Activated CD4-positive, alpha-beta T cell treated with anti-CD3 and anti-CD28 coated beads for 36 hours (primary cell): ENCODE measurements at regions of chr9 and their contacts with region 1.

Region 1: GRCh38 chr9:14353222-14354056 is 39.5 kb upstream of the NFIB start:
- DNase-seq: peak; percentile 90
- ATAC-seq: peak; percentile 33
- H3K4me3 Mint-ChIP-seq: no peak overlapping the region
- H3K27ac Mint-ChIP-seq: no peak overlapping the region
- H3K4me1 Mint-ChIP-seq: peaks cover 6% of the 10 kb centered on the region
- H3K27me3 Mint-ChIP-seq: peaks cover 55% of the 10 kb centered on the region

Region 2: DNA sequence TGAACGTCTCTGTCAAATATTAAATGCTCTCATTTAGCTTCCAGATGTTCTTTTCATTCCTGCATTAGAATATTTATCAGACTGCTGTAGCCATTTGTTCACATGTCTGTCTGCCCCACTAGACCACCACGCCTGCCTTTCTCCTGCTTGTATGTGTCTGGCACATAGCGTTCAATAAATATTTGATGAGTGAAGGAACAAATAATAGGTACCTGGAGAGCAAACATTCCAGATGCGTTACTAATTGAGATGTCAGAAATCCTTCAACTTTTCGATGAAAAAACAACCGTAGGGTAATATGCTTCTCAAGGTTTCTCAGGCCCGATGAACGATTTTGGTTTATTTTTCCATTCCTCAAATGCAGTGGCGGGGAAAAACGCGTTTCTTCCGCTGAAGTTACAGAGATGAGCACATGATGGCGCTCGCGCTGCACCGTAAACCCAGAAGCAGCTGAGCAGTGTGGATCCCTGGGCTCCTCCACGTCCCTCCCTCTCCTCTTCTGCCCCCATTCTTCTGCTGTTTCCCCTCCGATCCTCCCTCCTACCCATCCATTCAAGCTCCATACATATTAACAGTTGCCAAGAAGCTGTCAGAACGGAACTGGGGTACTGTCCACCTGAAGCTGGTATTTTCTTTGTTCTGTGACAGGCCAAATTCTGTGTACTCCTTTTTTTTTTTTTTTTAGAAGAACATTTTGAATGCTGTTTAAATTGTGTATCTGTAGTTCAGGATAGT is 1319.3 kb before region 1 on chr9:
- CTCF ChIA-PET with region 1: no interaction called
- POLR2A ChIA-PET with region 1: no interaction called
- intact Hi-C with region 1: loop called in 1 of 2 experiments (anchors 5 kb)
- DNase-seq: peak; percentile 39
- ATAC-seq: no peak
- H3K4me3 Mint-ChIP-seq: no peak overlapping the region
- H3K27ac Mint-ChIP-seq: no peak overlapping the region
- H3K4me1 Mint-ChIP-seq: no peaks in the 10 kb centered on the region
- H3K27me3 Mint-ChIP-seq: no peaks in the 10 kb centered on the region

Region 3: DNA sequence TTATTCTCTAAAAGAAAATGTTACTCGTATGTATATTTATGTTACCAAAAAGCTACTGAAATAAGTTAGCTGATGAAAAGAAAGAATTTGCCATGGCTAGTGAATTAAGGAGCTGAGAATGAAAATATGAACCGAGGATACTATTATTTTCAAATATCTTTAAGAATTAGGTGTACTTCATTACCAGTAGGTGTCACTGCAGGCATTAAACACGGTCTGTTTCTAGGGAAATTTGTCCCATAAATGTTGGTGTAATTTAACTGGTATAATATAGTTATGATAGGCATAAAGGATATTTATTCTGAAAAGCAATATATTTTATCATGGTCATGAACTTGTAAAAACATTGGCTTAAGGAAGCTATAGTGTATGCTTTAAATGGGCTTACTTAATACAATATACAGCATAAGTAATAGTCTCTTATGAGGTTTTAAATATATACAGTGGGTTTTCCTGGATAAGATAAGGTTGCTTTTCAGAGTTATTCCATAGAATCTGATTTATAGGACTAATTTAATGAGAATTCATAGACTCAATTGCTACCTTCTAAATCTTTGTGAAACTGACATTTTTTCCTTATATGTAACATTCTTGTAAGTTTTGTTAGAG is 1001.6 kb before region 1 on chr9:
- CTCF ChIA-PET with region 1: no interaction called
- POLR2A ChIA-PET with region 1: no interaction called
- intact Hi-C with region 1: loop called in 1 of 2 experiments (anchors 2 kb)
- DNase-seq: no peak
- ATAC-seq: no peak
- H3K4me3 Mint-ChIP-seq: no peak overlapping the region
- H3K27ac Mint-ChIP-seq: no peak overlapping the region
- H3K4me1 Mint-ChIP-seq: no peaks in the 10 kb centered on the region
- H3K27me3 Mint-ChIP-seq: no peaks in the 10 kb centered on the region

Region 4: DNA sequence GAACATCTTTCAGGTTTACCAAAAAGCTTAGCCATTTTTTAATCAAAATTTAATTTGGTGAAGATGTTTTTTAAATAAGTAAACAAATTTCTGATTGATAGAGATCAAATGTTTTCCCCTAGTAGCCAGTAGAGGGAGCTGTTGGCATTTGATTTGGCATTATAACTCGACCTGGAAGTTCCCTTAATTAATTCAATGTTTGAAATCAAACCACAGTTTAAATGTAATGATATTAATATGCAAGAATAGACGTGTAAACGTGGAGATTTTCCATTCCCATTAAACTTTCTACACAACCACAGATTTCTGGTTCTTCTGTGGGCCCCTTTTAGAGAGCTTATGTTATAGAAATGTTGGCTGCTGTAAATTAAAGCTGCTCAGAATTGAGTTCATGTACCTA is 925.9 kb before region 1 on chr9:
- CTCF ChIA-PET with region 1: interaction called, 20 read pairs
- POLR2A ChIA-PET with region 1: no interaction called
- intact Hi-C with region 1: loop called (anchors 1 kb)
- DNase-seq: no peak
- ATAC-seq: no peak
- H3K4me3 Mint-ChIP-seq: no peak overlapping the region
- H3K27ac Mint-ChIP-seq: no peak overlapping the region
- H3K4me1 Mint-ChIP-seq: no peaks in the 10 kb centered on the region
- H3K27me3 Mint-ChIP-seq: no peaks in the 10 kb centered on the region

Region 5: GRCh38 chr9:13446938-13447842 is 906.2 kb before region 1 on chr9:
- CTCF ChIA-PET with region 1: no interaction called
- POLR2A ChIA-PET with region 1: no interaction called
- intact Hi-C with region 1: loop called in 1 of 2 experiments (anchors 5 kb)
- DNase-seq: no peak
- ATAC-seq: no peak
- H3K4me3 Mint-ChIP-seq: no peak overlapping the region
- H3K27ac Mint-ChIP-seq: no peak overlapping the region
- H3K4me1 Mint-ChIP-seq: no peaks in the 10 kb centered on the region
- H3K27me3 Mint-ChIP-seq: no peaks in the 10 kb centered on the region

Region 6: GRCh38 chr9:14768405-14769229 is 415.2 kb after region 1 on chr9:
- CTCF ChIA-PET with region 1: no interaction called
- POLR2A ChIA-PET with region 1: no interaction called
- intact Hi-C with region 1: loop called in 1 of 2 experiments (anchors 1 kb)
- DNase-seq: no peak
- ATAC-seq: no peak
- H3K4me3 Mint-ChIP-seq: no peak overlapping the region
- H3K27ac Mint-ChIP-seq: no peak overlapping the region
- H3K4me1 Mint-ChIP-seq: no peaks in the 10 kb centered on the region
- H3K27me3 Mint-ChIP-seq: peaks cover 27% of the 10 kb centered on the region

Region 7: DNA sequence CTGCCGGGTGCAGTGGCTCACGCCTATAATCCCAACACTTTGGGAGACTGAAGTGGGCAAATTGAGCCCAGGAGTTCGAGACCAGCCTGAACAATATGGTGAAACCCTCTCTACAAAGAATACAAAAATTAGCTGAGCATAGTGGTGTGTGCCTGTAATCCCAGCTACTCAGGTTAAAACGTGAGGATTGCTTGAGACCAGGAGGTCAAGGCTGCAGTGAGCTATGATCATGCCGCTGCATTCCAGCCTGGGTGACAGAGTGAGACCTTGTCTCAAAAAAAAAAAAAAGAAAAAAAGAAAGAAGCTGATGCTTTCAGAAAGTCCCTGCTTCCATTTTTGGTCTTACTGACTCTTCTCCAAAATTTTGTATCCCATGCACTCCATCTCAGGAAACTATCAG is 1100.5 kb after region 1 on chr9:
- CTCF ChIA-PET with region 1: no interaction called
- POLR2A ChIA-PET with region 1: no interaction called
- intact Hi-C with region 1: no loop called
- DNase-seq: no peak
- ATAC-seq: no peak
- H3K4me3 Mint-ChIP-seq: no peak overlapping the region
- H3K27ac Mint-ChIP-seq: no peak overlapping the region
- H3K4me1 Mint-ChIP-seq: no peaks in the 10 kb centered on the region
- H3K27me3 Mint-ChIP-seq: no peaks in the 10 kb centered on the region